Tibial artery (tissue), 4 donors: ENCODE measurements at regions of chr1 and their contacts with region 1.

Region 1: DNA sequence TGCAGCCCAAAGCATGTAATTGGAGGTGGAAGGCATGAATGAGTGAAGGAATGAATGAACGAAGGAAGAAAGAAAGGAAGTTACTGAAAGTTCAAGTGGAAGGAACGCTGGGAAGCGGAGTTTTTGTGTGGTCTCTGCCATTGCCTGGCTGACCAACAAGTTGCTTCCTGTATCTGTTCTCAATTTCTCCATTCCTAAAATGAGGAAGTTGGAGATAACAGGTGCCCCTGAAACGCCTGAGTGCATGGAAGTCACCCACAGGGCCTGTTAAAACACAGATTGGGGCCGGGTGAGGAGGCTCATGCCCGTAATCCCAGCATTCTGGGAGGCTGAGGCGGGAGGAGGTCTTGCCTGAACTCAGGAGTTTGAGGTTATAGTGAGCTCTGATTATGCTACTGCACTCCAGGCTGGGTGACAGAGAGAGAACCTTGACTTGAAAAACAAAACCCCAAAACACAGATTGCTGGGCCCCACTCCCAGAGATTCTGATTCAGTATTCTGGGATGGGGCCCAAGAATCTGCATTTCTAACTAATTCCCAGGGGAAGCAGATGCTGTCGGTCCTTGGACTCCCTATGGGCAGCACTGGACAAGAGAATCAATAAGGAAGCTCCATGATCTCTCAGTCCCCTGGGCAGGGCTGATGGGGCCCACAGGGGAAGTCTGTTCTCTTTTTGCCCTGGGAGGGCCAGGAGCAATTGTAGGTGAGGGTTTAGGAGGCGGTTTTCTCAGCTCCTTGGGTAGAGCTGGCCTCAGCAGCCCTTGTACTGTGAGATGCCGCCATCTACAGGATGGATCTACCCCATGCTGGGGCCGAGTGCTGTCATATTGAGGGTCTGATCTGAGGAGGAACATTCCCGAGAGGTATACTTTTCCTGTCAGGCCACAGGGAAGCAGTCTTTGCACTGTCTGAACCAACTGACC is 3.3 kb upstream of the CNR2 start:
- DNase-seq: peak; percentile 67 to 76
- H3K4me3 ChIP-seq: no peak overlapping the region
- H3K27ac ChIP-seq: no peak overlapping the region
- H3K4me1 ChIP-seq: peaks cover 0 to 22% (median 10%) of the 10 kb centered on the region in 4 donors
- H3K27me3 ChIP-seq: peaks cover 0 to 6% of the 10 kb centered on the region in 2 donors
- CTCF ChIP-seq: peak; percentile 42 to 52

Region 2: GRCh38 chr1:23777979-23778814 is 138.3 kb before region 1 on chr1 and contains the start of gene PITHD1:
- intact Hi-C with region 1: loop called (anchors 5 kb)
- DNase-seq: peak; percentile 73 to 86
- H3K4me3 ChIP-seq: peak within 1 kb of the TSS; percentile 85 to 97
- H3K27ac ChIP-seq: peak within 1 kb of the TSS; percentile 88 to 91
- H3K4me1 ChIP-seq: peaks cover 0 to 24% (median 17%) of the 10 kb centered on the region in 4 donors
- H3K27me3 ChIP-seq: no peaks in the 10 kb centered on the region
- CTCF ChIP-seq: no peak

Region 3: GRCh38 chr1:23809751-23810171 is 106.7 kb before region 1 on chr1:
- intact Hi-C with region 1: loop called (anchors 10 kb)
- DNase-seq: peak; percentile 62 to 82
- H3K4me3 ChIP-seq: no peak overlapping the region
- H3K27ac ChIP-seq: no peak overlapping the region
- H3K4me1 ChIP-seq: no peaks in the 10 kb centered on the region
- H3K27me3 ChIP-seq: no peaks in the 10 kb centered on the region
- CTCF ChIP-seq: peak; percentile 40 to 50

Region 4: DNA sequence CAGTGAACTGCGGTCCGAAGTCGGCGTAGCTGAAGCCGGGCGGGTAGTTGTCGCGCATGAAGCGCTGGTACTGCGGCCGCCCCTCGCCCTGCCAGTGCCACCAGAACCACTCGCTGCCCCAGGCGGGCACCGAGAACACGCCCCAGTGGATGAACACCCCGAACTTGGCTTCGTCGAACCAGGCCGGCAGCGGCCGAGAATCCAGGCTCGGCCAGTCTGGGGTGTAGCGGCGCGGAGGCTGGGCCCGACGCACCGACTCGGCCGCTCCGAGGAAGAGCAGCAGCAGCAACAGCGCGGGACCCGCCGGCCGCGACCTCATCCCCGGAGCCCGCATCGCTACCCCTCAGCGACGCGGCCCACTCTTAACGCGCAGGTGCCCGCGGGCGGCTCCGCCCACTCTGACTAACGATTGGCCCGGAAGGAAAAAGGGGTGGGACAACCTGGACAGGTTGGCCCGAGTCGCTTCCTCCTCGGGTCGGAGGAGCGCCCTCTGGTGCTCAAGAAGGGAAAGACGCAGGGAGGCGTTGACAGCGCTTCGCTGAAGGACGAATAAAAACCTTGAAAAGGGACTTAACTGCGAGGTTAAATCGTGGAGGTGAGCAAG is 48.4 kb before region 1 on chr1 and contains the start of gene FUCA1:
- intact Hi-C with region 1: loop called (anchors 10 kb)
- DNase-seq: peak; percentile 93 to 96
- H3K4me3 ChIP-seq: peak within 1 kb of the TSS; percentile 73 to 82
- H3K27ac ChIP-seq: peak within 1 kb of the TSS; percentile 71 to 77
- H3K4me1 ChIP-seq: peaks cover 6 to 16% (median 10%) of the 10 kb centered on the region in 4 donors
- H3K27me3 ChIP-seq: no peaks in the 10 kb centered on the region
- CTCF ChIP-seq: peak; percentile 93 to 97

Region 5: DNA sequence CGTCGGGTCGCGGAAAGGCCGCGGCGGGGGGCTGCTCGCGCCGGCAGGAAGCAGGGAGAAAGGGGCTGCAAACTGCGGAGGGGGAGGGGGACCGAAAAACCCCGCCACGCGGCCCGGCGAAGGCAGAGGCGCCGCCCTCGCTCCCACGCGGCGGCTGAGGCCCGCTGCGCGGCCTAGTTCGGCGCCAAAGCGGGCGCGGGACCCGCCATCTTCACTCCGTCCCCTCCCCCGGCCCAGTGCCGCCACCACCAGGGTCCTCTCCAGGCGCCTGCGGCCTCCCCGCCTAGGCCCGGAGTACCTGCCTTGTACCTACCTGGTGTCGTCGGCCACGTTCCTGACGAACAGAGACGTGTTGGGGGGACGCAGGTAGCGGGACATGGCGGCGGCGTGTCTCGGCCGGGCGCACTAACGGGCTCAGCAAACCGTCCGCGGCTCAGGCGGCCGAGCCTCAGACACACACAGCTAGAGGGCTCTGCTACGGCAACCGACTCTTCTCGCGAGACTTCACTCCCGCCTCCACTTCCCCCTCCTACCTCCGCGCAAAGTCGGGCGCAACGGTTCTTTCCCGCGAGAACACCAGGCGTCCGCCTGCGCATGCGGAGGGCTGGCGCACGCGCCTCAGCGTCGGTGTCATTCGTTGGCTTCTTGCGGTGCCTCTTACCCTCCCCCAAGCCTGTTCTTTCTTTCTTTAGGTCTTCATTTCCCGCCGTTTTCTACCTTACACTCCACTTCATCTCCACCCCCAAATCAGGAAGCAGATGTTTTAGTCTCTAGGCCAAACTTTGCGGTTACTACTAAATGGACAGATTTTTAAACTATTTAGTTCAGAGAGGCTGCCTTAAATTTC is 63.6 kb after region 1 on chr1 and contains the start of gene SRSF10:
- intact Hi-C with region 1: no loop called
- DNase-seq: peak; percentile 97 to 99
- H3K4me3 ChIP-seq: peak within 1 kb of the TSS; percentile 82 to 93
- H3K27ac ChIP-seq: peak within 1 kb of the TSS; percentile 97 to 98
- H3K4me1 ChIP-seq: peaks cover 0 to 57% (median 44%) of the 10 kb centered on the region in 4 donors
- H3K27me3 ChIP-seq: no peaks in the 10 kb centered on the region
- CTCF ChIP-seq: peak; percentile 34 to 37

Region 6: GRCh38 chr1:24018611-24019580 is 102.4 kb after region 1 on chr1:
- intact Hi-C with region 1: no loop called
- DNase-seq: peak; percentile 99
- H3K4me3 ChIP-seq: peak overlapping the region; percentile 17 to 30
- H3K27ac ChIP-seq: peak overlapping the region; percentile 86
- H3K4me1 ChIP-seq: peaks cover 0 to 85% (median 76%) of the 10 kb centered on the region in 4 donors
- H3K27me3 ChIP-seq: no peaks in the 10 kb centered on the region
- CTCF ChIP-seq: no peak